Prostate gland (tissue), 2 donors: ENCODE measurements at regions of chr15 and their contacts with region 1.

Region 1: DNA sequence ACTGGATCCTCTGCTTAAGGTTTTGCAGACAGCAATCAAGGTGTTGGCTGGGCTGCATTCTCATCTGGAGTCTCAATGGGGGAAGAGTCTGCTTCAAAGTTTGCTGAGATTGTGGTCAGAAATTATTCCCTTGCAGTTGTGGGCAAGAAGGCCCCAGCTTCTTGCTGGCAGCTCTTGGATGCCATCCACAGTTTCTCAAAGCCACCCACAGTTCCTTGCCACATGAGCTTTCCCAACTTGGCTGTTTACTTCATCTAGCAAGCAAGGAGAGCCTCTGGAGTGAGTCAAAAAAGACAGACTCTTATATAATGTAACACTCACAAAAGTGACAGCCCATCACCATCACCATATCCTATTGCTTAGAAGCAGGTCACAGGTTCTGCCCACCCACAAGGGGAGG is 62.1 kb upstream of the ABHD2 start:
- DNase-seq: no peak
- H3K4me3 ChIP-seq: no peak overlapping the region
- H3K27ac ChIP-seq: no peak overlapping the region
- H3K4me1 ChIP-seq: no peaks in the 10 kb centered on the region
- H3K27me3 ChIP-seq: no peaks in the 10 kb centered on the region
- CTCF ChIP-seq: no peak
- POLR2A ChIP-seq: no peak

Region 2: DNA sequence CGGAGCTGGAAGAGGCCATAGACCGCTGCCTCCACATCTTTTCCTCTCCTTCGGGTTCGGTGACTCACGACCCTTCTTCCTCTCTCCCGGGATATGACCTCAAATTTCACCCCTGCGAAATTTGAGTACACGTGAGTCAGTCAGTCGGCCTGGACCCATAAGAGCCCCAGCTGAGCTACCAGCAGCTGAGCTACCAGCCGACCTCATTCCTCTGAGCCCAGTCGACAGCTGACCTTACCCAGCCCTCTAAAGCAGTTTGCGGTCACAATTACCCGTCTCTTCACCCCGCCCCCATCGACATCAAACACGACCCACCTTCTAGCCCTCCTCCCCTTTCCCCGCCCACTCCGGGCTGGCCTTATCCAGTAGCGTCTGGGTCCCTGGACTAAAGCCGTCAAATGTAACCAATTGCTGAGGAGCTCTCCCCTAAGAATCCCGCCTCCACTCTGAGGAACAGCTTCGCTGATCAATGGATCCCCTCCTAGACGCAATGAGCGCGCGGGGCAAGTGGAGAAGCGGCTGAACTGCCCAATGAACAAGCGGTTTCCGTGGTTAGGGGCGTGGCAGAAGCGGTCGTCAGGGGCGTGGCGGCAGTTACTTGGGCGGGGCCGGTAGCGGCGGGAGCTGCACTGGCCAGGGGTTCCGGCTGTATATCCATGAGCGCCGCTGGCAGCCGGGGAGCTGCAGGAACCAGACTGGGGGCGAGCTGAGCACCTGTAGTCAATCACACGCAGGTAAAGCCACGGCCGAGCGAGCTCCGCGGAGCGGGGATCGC is 61.9 kb after region 1 on chr15 and contains the start of gene ABHD2:
- intact Hi-C with region 1: loop called (anchors 2 kb)
- DNase-seq: peak; percentile 99
- H3K4me3 ChIP-seq: peak within 1 kb of the TSS; percentile 86 to 88
- H3K27ac ChIP-seq: peak within 1 kb of the TSS; percentile 92 to 95
- H3K4me1 ChIP-seq: peaks cover 5% of the 10 kb centered on the region
- H3K27me3 ChIP-seq: no peaks in the 10 kb centered on the region
- CTCF ChIP-seq: peak in 1 of 4 experiments; percentile 26
- POLR2A ChIP-seq: peak; percentile 95
- total RNA-seq, gene ABHD2: 111 to 253 TPM